Activated naive CD4-positive, alpha-beta T cell treated with anti-CD3 and anti-CD28 coated beads for 36 hours (primary cell): ENCODE measurements at regions of chr2 and their contacts with region 1.

Region 1: DNA sequence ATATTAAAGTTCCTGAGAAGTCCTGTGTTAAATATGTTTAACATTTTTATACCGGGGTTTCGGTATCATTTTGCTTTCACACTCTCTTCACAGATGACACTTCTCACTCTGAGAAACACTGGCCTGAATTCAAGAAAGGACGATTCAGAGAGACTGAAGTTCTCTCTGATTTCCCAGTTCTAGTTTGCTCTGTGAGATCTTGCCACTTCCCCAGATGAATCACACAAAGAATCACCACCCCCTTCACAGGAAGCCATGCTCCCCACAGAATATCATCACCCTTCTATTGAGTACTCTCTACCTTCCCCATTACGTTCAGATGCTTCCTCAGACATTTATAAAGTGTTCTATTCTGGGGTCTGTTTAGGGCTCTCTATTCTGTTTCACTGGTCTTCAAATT is 16.1 kb upstream of the CD207 start:
- DNase-seq: peak; percentile 71
- H3K4me3 Mint-ChIP-seq: no peak overlapping the region
- H3K27ac Mint-ChIP-seq: peak overlapping the region; percentile 83
- H3K4me1 Mint-ChIP-seq: peaks cover 28% of the 10 kb centered on the region
- H3K27me3 Mint-ChIP-seq: no peaks in the 10 kb centered on the region

Region 2: GRCh38 chr2:70767699-70768589 is 83.8 kb before region 1 on chr2 and contains the start of gene ADD2:
- CTCF ChIA-PET with region 1: interaction called, 5 read pairs
- intact Hi-C with region 1: loop called (anchors 1 kb)
- DNase-seq: peak; percentile 89
- H3K4me3 Mint-ChIP-seq: peak within 1 kb of the TSS; percentile 91
- H3K27ac Mint-ChIP-seq: peak within 1 kb of the TSS; percentile 83
- H3K4me1 Mint-ChIP-seq: peaks cover 8% of the 10 kb centered on the region
- H3K27me3 Mint-ChIP-seq: peaks cover 10% of the 10 kb centered on the region
- total RNA-seq, gene ADD2: 42.9 to 46.2 TPM

Region 3: GRCh38 chr2:70817284-70817954 is 34.3 kb before region 1 on chr2:
- CTCF ChIA-PET with region 1: no interaction called
- intact Hi-C with region 1: loop called (anchors 5 kb)
- DNase-seq: no peak
- H3K4me3 Mint-ChIP-seq: no peak overlapping the region
- H3K27ac Mint-ChIP-seq: no peak overlapping the region
- H3K4me1 Mint-ChIP-seq: no peaks in the 10 kb centered on the region
- H3K27me3 Mint-ChIP-seq: no peaks in the 10 kb centered on the region

Region 4: GRCh38 chr2:70826696-70827350 is 24.9 kb before region 1 on chr2:
- CTCF ChIA-PET with region 1: interaction called, 3 read pairs
- intact Hi-C with region 1: loop called (anchors 1 kb)
- DNase-seq: peak; percentile 23
- H3K4me3 Mint-ChIP-seq: no peak overlapping the region
- H3K27ac Mint-ChIP-seq: peak overlapping the region; percentile 92
- H3K4me1 Mint-ChIP-seq: peaks cover 31% of the 10 kb centered on the region
- H3K27me3 Mint-ChIP-seq: no peaks in the 10 kb centered on the region